ENCODE measurements at regions of chr5 and their contacts with region 1.

Region 1: GRCh38 chr5:112757468-112758208 is 20.0 kb downstream of the APC start:
- DNase-seq: peak; percentile 78
- H3K4me3 ChIP-seq: no peak overlapping the region
- H3K27ac ChIP-seq: no peak overlapping the region
- H3K4me1 ChIP-seq: peaks cover 3% of the 10 kb centered on the region
- H3K27me3 ChIP-seq: no peaks in the 10 kb centered on the region
- CTCF ChIP-seq: peak; percentile 49 to 50
- POLR2A ChIP-seq: no peak

Region 2: DNA sequence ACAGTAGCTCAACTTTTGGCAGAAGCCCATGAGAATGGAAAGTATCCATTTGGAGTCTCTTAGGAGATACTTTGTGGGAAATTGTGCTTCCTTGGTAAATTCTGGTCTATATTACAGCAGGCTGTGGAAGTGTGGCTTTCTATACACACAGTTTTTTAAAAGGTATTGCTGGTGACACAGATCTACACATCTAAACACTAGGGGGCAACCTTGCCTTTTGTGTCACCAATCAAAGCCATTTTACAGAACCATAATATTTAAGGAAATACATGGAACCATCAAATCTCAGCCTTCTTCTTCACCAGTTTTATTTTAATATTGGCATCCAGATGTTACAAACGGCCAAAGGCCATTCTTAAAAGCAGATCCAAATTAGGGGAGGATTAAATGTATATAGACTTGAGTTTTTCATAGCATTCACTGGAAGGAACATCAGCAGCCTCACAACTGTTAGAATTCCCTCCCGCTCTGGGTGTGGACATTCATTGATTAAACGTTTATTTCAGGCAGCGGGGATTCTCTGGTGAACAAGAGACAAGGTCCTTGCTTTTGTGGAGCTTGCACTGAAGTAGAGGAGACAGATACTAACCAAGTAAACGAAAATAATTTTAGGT is 206.1 kb before region 1 on chr5:
- CTCF ChIA-PET with region 1: interaction called, 162 read pairs
- POLR2A ChIA-PET with region 1: no interaction called
- dilution Hi-C with region 1: no loop called
- intact Hi-C with region 1: loop called (anchors 1 kb)
- DNase-seq: peak; percentile 67
- H3K4me3 ChIP-seq: no peak overlapping the region
- H3K27ac ChIP-seq: no peak overlapping the region
- H3K4me1 ChIP-seq: no peaks in the 10 kb centered on the region
- H3K27me3 ChIP-seq: peaks cover 0 to 4% of the 10 kb centered on the region in 2 experiments
- CTCF ChIP-seq: peak; percentile 42 to 58
- POLR2A ChIP-seq: no peak

Region 3: DNA sequence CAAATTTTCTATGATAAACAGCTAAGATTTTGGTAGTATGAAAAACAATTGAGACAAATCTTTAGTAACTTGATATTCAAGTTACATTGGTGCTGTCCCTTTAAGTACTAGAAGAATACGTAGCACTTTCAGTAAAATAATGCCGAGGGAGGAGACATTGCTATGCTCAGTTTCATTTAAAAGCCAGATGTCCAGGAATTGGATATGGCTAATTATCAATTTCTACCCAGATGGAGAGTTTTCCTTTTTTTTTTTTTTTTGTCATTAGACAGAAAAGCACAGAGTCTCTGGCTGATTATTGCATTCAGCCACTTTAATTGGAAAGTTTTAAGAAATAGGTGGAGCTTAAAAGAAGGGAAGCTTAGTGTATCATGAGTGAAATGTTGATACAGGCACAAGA is 60.3 kb before region 1 on chr5:
- CTCF ChIA-PET with region 1: interaction called, 188 read pairs
- POLR2A ChIA-PET with region 1: no interaction called
- dilution Hi-C with region 1: no loop called
- intact Hi-C with region 1: no loop called
- DNase-seq: no peak
- H3K4me3 ChIP-seq: no peak overlapping the region
- H3K27ac ChIP-seq: no peak overlapping the region
- H3K4me1 ChIP-seq: no peaks in the 10 kb centered on the region
- H3K27me3 ChIP-seq: no peaks in the 10 kb centered on the region
- CTCF ChIP-seq: no peak
- POLR2A ChIP-seq: no peak

Region 4: DNA sequence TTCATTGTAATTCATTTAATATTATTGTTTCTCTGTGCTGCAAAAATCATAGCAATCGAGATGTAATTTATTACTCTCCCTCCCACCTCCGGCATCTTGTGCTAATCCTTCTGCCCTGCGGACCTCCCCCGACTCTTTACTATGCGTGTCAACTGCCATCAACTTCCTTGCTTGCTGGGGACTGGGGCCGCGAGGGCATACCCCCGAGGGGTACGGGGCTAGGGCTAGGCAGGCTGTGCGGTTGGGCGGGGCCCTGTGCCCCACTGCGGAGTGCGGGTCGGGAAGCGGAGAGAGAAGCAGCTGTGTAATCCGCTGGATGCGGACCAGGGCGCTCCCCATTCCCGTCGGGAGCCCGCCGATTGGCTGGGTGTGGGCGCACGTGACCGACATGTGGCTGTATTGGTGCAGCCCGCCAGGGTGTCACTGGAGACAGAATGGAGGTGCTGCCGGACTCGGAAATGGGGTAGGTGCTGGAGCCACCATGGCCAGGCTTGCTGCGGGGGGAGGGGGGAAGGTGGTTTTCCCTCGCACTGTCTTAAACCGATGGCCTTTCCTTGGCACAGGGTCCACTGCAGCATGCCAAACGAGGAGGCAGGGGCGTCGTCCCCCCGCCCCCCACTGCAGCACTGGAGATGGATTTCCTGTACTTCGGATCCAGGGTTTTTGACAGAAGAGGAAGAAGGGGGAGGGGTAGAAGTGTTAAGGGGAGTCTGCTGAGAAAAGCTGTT is 20.0 kb before region 1 on chr5 and contains the start of gene APC:
- CTCF ChIA-PET with region 1: interaction called, 28 read pairs
- POLR2A ChIA-PET with region 1: no interaction called
- dilution Hi-C with region 1: no loop called
- intact Hi-C with region 1: no loop called
- DNase-seq: peak; percentile 91
- H3K4me3 ChIP-seq: peak within 1 kb of the TSS; percentile 57 to 83 (median 63)
- H3K27ac ChIP-seq: peak within 1 kb of the TSS; percentile 57
- H3K4me1 ChIP-seq: peaks cover 32% of the 10 kb centered on the region
- H3K27me3 ChIP-seq: no peaks in the 10 kb centered on the region
- CTCF ChIP-seq: no peak
- POLR2A ChIP-seq: peak; percentile 34
- total RNA-seq, gene APC: 39.6 and 42.0 TPM in 2 replicates

Region 5: GRCh38 chr5:112848116-112848811 is 90.6 kb after region 1 on chr5:
- CTCF ChIA-PET with region 1: interaction called, 15 read pairs
- POLR2A ChIA-PET with region 1: no interaction called
- dilution Hi-C with region 1: no loop called
- intact Hi-C with region 1: no loop called
- DNase-seq: peak; percentile 68
- H3K4me3 ChIP-seq: no peak overlapping the region
- H3K27ac ChIP-seq: no peak overlapping the region
- H3K4me1 ChIP-seq: no peaks in the 10 kb centered on the region
- H3K27me3 ChIP-seq: no peaks in the 10 kb centered on the region
- CTCF ChIP-seq: peak; percentile 52 to 69
- POLR2A ChIP-seq: no peak

Region 6: DNA sequence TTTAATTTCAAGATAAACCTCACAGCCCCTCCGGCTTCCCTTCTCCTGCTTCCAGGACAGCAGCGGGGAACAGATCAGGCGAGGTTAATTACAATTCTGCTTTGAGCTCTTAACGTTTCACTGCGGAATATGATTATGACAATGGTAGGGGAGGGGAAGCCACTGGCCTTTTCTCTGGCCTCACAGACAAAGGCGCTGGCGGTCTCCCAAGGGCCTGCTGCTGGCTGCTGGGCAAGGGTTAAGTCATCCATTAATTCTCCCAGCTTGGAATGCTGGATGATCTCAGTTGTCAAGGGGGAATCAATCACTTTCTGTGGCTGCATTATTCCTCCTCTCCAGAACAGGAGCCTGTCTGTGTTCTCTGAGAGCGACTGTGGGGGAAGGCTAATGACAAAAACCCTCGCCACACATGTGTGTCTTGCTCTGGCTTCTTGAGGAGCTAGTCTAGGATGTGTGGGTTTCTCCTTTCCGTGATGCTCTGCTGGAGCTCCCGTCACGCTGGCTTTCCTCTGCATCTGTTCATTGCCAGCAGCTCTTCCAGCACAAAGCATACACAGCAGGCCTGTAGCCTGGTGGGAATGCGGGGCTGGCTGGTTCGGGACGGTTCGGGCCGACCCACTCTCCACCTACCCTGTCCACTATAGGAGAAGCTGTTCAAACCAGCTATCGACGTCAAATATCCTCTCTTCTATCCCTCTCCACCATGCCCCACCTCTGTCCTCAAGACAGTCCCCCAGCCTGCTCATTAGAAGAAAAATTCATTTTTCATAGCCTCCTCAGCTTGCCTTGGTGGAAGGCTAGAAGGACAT is 301.8 kb after region 1 on chr5:
- CTCF ChIA-PET with region 1: no interaction called
- POLR2A ChIA-PET with region 1: no interaction called
- dilution Hi-C with region 1: no loop called
- intact Hi-C with region 1: no loop called
- DNase-seq: peak; percentile 87
- H3K4me3 ChIP-seq: no peak overlapping the region
- H3K27ac ChIP-seq: peak overlapping the region; percentile 81
- H3K4me1 ChIP-seq: peaks cover 16% of the 10 kb centered on the region
- H3K27me3 ChIP-seq: no peaks in the 10 kb centered on the region
- CTCF ChIP-seq: no peak
- POLR2A ChIP-seq: no peak